Caco-2 (cell line): ENCODE measurements at regions of chrX and their contacts with region 1.

Region 1: GRCh38 chrX:93874554-93874953 is 200.5 kb downstream of the FAM133A start:
- DNase-seq: peak in 1 of 2 experiments; percentile 39
- H3K4me3 ChIP-seq: no peak overlapping the region
- H3K4me3 Mint-ChIP-seq: no peak overlapping the region
- H3K27ac Mint-ChIP-seq: no peak overlapping the region
- H3K4me1 ChIP-seq: no peaks in the 10 kb centered on the region
- H3K4me1 Mint-ChIP-seq: no peaks in the 10 kb centered on the region
- H3K27me3 ChIP-seq: no peaks in the 10 kb centered on the region
- H3K27me3 Mint-ChIP-seq: no peaks in the 10 kb centered on the region
- CTCF ChIP-seq: peak; percentile 36 to 47

Region 2: DNA sequence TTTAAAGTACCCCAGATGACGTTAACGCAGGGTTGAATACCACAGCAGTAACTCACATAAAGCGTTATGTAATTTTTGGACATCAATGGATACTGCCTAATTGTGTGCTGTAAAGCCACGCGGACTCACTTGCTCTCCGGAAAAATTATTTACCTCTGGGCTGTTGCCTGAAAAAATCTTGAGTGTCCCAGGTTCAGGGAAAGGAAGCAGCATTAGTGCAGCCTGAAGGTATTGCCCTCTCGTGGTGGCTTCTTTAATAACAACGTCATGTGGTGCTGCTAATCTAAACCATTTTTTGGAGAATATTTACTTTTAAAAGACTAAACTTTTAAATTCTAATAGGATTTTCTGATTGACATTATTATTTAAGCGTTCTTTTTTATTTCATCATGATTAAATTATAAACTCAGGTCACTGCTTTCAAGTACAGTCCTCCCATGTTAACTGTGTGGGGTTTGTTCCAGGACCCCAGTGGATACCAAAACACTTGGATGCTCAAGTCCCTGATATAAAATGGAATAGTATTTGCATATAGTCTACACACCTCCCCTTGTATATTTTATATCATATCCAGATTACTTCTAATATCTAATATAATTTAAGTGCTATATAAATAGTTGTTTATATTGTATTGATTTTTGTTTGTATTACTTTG is 184.3 kb after region 1 on chrX:
- CTCF ChIA-PET with region 1: no interaction called
- POLR2A ChIA-PET with region 1: no interaction called
- intact Hi-C with region 1: loop called (anchors 1 kb)
- DNase-seq: peak in 1 of 2 experiments; percentile 11
- H3K4me3 ChIP-seq: no peak overlapping the region
- H3K4me3 Mint-ChIP-seq: no peak overlapping the region
- H3K27ac Mint-ChIP-seq: no peak overlapping the region
- H3K4me1 ChIP-seq: no peaks in the 10 kb centered on the region
- H3K4me1 Mint-ChIP-seq: no peaks in the 10 kb centered on the region
- H3K27me3 ChIP-seq: no peaks in the 10 kb centered on the region
- H3K27me3 Mint-ChIP-seq: no peaks in the 10 kb centered on the region
- CTCF ChIP-seq: peak; percentile 49 to 59